Left colon (tissue), 2 donors: ENCODE measurements at regions of chr10 and their contacts with region 1.

Region 1: DNA sequence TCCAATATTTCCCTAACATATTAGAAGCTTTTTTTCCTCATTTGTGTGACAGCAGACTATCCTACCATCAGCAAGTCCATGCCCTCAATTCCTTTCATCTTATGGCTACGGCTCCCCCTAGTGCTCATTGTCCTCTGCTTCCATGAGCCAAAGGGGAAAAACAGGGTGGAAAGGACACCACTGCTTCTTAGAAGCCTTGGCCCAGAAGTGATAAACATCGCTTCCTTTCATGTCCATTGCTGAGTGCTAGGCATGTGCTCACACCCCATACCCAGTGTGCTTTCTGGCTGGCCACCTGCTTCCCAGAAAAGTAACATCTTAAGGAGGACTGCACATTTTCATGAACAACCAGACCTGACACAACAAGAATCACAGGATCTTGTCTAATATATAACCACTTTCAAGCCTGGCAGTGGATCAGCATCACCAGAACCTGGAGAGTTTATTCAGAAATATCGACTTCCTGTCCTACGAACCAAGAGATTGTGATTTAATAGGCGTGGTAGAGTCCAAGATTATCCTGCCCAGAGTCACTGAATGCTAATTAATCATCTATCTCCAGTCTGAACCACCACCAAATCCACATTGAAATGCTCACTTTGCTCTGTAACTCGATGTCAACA is 650.5 kb upstream of the SORCS1 start:
- DNase-seq: peak; percentile 47 to 76
- ATAC-seq: peak; percentile 97

Region 2: GRCh38 chr10:107409522-107409921 is 405.5 kb before region 1 on chr10:
- intact Hi-C with region 1: loop called (anchors 10 kb)
- DNase-seq: peak in 1 of 2 donors; percentile 26
- ATAC-seq: peak; percentile 71

Region 3: GRCh38 chr10:107418407-107418806 is 396.6 kb before region 1 on chr10:
- intact Hi-C with region 1: loop called in 1 of 2 experiments (anchors 10 kb)
- DNase-seq: no peak
- ATAC-seq: no peak

Region 4: GRCh38 chr10:107631876-107632275 is 183.1 kb before region 1 on chr10:
- intact Hi-C with region 1: no loop called
- DNase-seq: no peak
- ATAC-seq: no peak

Region 5: GRCh38 chr10:107740962-107741690 is 73.8 kb before region 1 on chr10:
- intact Hi-C with region 1: no loop called
- DNase-seq: no peak
- ATAC-seq: no peak

Region 6: GRCh38 chr10:108147346-108147745 is 332.4 kb after region 1 on chr10:
- intact Hi-C with region 1: no loop called
- DNase-seq: no peak
- ATAC-seq: no peak

Region 7: DNA sequence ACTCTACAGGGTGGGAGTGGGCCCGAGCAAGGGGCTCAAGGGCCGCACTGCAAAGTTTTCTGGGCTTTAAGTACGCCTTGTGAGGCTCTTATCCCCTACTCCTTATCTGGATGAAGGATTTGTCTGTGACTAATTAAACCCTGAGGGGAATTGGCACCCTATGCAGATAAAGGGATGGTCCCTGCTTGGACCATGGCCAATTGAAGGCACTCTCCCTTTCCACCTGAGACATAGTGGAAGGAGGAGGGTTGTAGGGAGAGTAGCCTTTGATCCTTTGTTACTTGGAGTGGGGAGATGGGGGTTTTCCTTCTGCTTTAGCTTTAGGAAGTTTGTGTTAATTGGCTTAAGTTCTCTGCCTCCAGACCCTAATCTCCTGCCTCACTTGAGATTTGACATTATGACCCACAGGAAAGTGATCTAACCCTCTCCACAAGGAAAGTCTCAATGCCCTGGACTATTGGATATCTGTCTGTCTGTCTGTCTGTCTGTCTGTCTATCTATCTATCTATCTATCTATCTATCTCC is 508.4 kb after region 1 on chr10:
- intact Hi-C with region 1: no loop called
- DNase-seq: no peak
- ATAC-seq: no peak